Esophagus squamous epithelium (tissue), 5 donors: ENCODE measurements at regions of chr6 and their contacts with region 1.

Region 1: DNA sequence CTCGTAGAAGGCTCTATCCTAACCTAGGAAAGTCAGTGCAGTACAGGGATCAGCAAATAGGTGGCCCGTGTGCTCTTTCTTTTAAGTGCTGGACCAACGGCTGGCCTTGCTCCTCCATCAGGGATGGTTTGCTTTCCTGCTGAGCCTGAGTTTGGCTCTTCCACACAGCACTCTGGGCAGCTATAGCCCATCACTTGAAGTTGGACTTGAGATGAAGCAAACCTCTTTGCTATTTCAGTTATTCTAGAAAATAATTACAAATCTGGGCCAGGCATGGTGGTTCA is 66.9 kb upstream of the KCNK16 start:
- DNase-seq: no peak
- H3K4me3 ChIP-seq: no peak overlapping the region
- H3K27ac ChIP-seq: no peak overlapping the region
- H3K4me1 ChIP-seq: peaks cover 0 to 6% (median 0%) of the 10 kb centered on the region in 3 donors
- H3K27me3 ChIP-seq: peaks cover 0 to 12% (median 0%) of the 10 kb centered on the region in 4 donors
- CTCF ChIP-seq: no peak
- POLR2A ChIP-seq: no peak

Region 2: GRCh38 chr6:39228992-39229767 is 160.2 kb before region 1 on chr6 and contains the start of gene KCNK5:
- intact Hi-C with region 1: no loop called
- DNase-seq: peak; percentile 9
- H3K4me3 ChIP-seq: peak within 1 kb of the TSS; percentile 51 to 79 (median 60)
- H3K27ac ChIP-seq: peak within 1 kb of the TSS; percentile 68 to 80 (median 74)
- H3K4me1 ChIP-seq: peaks cover 0 to 57% (median 14%) of the 10 kb centered on the region in 3 donors
- H3K27me3 ChIP-seq: peaks cover 0 to 44% (median 0%) of the 10 kb centered on the region in 4 donors
- CTCF ChIP-seq: peak; percentile 45 to 96 (median 88)
- POLR2A ChIP-seq: peak in 2 of 4 donors; percentile 49 to 69
- total RNA-seq, gene KCNK5: 6.1 to 11.0 (median 8.7) TPM

Region 3: DNA sequence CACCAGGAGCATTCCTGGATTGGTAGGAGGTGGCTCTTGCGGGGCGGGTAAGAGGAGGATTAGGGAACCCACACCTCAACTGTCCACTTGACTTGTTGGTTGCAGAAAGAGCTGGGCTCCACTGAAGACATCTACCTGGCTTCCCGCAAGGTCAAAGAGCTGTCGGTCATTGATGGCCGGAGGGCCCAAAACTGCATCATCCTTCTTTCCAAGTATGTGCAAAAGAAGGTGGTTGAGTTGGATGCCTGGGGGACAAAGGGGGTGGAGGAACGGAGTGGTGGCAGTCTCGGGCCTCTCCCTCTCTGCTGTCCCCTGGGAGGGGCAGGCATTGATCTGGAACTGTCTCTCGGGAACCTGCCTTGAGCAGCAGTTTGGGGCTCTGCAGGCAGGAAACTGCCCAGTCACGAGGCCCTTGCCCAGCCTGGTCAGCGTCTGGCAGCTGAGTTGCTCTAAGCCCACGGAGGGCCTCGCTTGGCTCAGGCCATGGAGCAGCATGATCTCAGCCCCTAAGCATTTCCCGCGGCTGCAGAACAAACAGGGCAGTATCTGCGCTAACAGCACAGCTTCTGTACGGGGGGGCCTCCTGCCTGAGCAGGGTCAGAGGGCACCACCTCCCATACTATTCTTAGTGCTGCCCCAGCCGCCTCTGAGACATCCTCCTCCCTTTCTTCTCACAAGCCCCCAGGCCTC is 498.1 kb after region 1 on chr6:
- intact Hi-C with region 1: loop called (anchors 10 kb)
- DNase-seq: no peak
- H3K4me3 ChIP-seq: no peak overlapping the region
- H3K27ac ChIP-seq: peak overlapping the region; percentile 39 to 89 (median 71)
- H3K4me1 ChIP-seq: peaks cover 0 to 33% (median 10%) of the 10 kb centered on the region in 3 donors
- H3K27me3 ChIP-seq: no peaks in the 10 kb centered on the region
- CTCF ChIP-seq: no peak
- POLR2A ChIP-seq: no peak